ENCODE measurements at regions of chr19 and their contacts with region 1.

Region 1: DNA sequence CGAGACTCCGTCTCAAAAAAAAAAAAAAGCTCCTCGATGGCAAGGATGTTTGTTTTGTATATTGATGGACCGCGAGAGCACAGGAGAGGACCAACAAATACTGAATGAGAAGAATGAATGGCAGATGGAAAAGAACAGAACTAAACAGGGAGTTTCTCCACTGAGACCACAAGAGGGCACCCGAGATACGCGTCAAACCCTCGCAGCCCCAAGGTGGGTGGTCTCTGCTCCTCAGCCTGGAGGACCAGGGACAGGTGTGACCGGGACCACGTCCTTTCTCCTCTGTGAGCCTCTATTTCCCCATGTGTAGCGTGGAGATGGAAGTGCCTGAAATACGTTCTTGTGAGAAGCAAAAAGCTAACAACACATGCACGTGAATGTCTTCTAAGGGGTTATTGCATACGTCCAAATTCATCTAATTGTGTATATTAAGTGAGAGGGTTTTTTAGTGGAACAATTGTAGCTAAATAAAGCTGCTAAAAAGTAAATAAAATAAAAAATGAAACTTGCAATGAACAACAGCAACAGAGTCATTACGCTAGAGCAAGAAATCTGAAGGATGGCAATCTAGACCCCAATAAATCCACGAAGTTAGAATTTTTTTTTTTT is 8.3 kb upstream of the CDC42EP5 start:
- DNase-seq: peak in 3 of 5 donors; percentile 43 to 50 (median 48)
- H3K4me3 ChIP-seq: no peak overlapping the region
- H3K4me3 Mint-ChIP-seq: peak overlapping the region in 1 of 8 donors; percentile 7
- H3K27ac ChIP-seq: no peak overlapping the region
- H3K27ac Mint-ChIP-seq: peak overlapping the region in 2 of 7 donors; percentile 44 to 78
- H3K4me1 ChIP-seq: no peaks in the 10 kb centered on the region
- H3K4me1 Mint-ChIP-seq: peaks cover 5 to 9% (median 8%) of the 10 kb centered on the region in 4 donors
- H3K27me3 ChIP-seq: no peaks in the 10 kb centered on the region
- H3K27me3 Mint-ChIP-seq: peaks cover 23 to 25% of the 10 kb centered on the region in 2 donors

Region 2: DNA sequence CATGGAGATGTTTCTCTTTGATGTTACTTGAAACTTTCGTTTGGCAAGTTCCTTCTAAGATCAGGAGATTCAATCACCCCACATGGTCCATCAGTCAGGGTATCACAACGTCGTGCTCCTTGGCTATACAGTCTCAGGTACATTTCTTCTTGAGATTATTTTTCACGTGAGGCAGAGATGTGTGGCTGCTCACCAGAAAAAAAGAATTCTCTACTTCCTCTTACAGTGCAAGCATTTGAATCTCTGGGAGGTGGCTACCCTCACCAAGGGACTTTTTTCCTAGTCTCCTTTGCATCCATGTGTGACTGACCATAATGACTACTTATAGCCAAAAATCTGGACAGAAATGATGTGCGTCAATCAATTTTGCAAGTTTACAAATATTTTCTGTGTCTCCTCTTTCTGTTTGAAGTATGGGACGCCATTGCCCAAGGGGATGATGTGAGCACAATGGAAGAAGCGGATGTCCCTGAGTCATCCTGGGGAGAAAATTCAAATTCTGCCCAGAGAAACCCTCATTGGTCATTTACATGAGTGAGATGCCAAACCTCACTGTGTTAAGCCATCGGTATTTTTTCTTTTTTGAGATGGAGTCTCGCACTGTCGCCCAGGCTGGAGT is 12.7 kb after region 1 on chr19:
- CTCF ChIA-PET with region 1: interaction called, 13 read pairs
- POLR2A ChIA-PET with region 1: no interaction called
- intact Hi-C with region 1: no loop called
- DNase-seq: no peak
- H3K4me3 ChIP-seq: no peak overlapping the region
- H3K4me3 Mint-ChIP-seq: no peak overlapping the region
- H3K27ac ChIP-seq: no peak overlapping the region
- H3K27ac Mint-ChIP-seq: no peak overlapping the region
- H3K4me1 ChIP-seq: no peaks in the 10 kb centered on the region
- H3K4me1 Mint-ChIP-seq: peaks cover 6 to 21% (median 14%) of the 10 kb centered on the region in 4 donors
- H3K27me3 ChIP-seq: no peaks in the 10 kb centered on the region
- H3K27me3 Mint-ChIP-seq: peaks cover 10 to 23% of the 10 kb centered on the region in 2 donors

Region 3: DNA sequence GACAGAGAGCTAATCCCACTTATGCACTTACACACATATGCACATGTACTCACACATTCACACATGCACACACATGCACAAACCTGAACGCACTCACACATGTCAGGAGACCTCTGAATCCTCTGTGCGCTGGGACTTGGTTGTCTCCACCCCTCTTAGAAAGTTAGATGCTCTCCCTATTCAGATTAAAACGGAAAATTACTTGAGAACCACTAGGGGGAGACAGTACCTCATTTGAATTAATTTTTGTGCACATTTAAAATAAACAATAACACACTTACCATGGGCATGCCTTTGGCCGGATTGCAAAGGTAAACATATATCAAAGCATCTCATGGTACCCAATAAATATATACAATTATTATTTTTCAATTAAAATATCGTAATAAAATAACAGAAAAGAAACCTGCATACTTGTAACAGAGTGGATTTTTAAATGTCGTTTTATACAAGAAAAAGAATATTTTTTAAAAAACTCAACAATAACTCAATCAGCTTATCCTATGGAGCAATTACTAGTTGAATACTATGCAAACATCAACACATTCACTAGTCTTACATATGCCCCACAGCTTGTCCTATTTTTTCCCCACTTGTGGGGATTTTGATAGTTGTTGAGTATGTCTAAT is 171.9 kb after region 1 on chr19:
- CTCF ChIA-PET with region 1: interaction called, 11 read pairs
- POLR2A ChIA-PET with region 1: no interaction called
- intact Hi-C with region 1: no loop called
- DNase-seq: peak in 1 of 5 donors; percentile 20
- H3K4me3 ChIP-seq: no peak overlapping the region
- H3K4me3 Mint-ChIP-seq: no peak overlapping the region
- H3K27ac ChIP-seq: no peak overlapping the region
- H3K27ac Mint-ChIP-seq: no peak overlapping the region
- H3K4me1 ChIP-seq: no peaks in the 10 kb centered on the region
- H3K4me1 Mint-ChIP-seq: no peaks in the 10 kb centered on the region
- H3K27me3 ChIP-seq: no peaks in the 10 kb centered on the region
- H3K27me3 Mint-ChIP-seq: peaks cover 9 to 18% of the 10 kb centered on the region in 2 donors

Region 4: DNA sequence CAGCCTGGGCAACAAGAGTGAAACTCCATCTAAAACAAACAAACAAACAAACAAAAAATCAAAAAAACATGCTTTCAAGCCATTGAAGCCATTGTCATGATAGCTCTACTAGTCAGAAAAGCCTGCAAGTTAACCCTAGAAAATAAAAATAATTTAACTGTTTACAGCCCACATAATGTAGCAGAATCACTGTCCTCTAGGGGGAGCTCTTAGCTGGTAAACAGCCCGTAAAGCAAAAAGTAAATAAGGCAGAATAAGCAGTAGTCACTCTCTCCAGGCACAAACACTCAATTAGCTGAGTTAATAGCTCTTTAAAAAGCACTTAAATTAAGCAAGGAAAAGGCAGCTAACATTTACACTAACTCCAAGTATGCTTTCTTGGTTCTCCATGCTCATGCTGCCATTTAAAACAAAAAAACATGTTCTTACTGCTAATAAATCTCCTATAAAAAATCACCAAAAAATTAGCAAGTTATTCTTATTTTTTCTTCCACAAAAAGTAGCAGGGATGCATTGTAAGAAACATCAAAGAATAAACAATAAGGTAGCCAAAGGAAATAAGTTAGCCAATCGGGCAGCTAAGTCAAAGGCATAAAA is 192.7 kb after region 1 on chr19:
- CTCF ChIA-PET with region 1: interaction called, 85 read pairs
- POLR2A ChIA-PET with region 1: no interaction called
- intact Hi-C with region 1: no loop called
- DNase-seq: peak in 1 of 5 donors; percentile 4
- H3K4me3 ChIP-seq: no peak overlapping the region
- H3K4me3 Mint-ChIP-seq: no peak overlapping the region
- H3K27ac ChIP-seq: no peak overlapping the region
- H3K27ac Mint-ChIP-seq: no peak overlapping the region
- H3K4me1 ChIP-seq: no peaks in the 10 kb centered on the region
- H3K4me1 Mint-ChIP-seq: no peaks in the 10 kb centered on the region
- H3K27me3 ChIP-seq: no peaks in the 10 kb centered on the region
- H3K27me3 Mint-ChIP-seq: peaks cover 6 to 9% of the 10 kb centered on the region in 2 donors

Region 5: GRCh38 chr19:54684527-54684926 is 203.1 kb after region 1 on chr19:
- CTCF ChIA-PET with region 1: interaction called, 15 read pairs
- POLR2A ChIA-PET with region 1: no interaction called
- intact Hi-C with region 1: no loop called
- DNase-seq: no peak
- H3K4me3 ChIP-seq: no peak overlapping the region
- H3K4me3 Mint-ChIP-seq: no peak overlapping the region
- H3K27ac ChIP-seq: no peak overlapping the region
- H3K27ac Mint-ChIP-seq: no peak overlapping the region
- H3K4me1 ChIP-seq: no peaks in the 10 kb centered on the region
- H3K4me1 Mint-ChIP-seq: no peaks in the 10 kb centered on the region
- H3K27me3 ChIP-seq: peaks cover 4% of the 10 kb centered on the region
- H3K27me3 Mint-ChIP-seq: peaks cover 6 to 16% of the 10 kb centered on the region in 2 donors